Activated T-helper 2 cell treated with anti-CD3 and anti-CD28 coated beads, Interferon-gamma antibody, Interleukin-2, Interleukin-4, amounts not matched to agents 10 μg/mL and 5 μg/mL and 100 μg/mL, durations not matched to agents 14 hours and 24 hours and 36 hours (primary cell): ENCODE measurements at regions of chr13 and their contacts with region 1.

Region 1: DNA sequence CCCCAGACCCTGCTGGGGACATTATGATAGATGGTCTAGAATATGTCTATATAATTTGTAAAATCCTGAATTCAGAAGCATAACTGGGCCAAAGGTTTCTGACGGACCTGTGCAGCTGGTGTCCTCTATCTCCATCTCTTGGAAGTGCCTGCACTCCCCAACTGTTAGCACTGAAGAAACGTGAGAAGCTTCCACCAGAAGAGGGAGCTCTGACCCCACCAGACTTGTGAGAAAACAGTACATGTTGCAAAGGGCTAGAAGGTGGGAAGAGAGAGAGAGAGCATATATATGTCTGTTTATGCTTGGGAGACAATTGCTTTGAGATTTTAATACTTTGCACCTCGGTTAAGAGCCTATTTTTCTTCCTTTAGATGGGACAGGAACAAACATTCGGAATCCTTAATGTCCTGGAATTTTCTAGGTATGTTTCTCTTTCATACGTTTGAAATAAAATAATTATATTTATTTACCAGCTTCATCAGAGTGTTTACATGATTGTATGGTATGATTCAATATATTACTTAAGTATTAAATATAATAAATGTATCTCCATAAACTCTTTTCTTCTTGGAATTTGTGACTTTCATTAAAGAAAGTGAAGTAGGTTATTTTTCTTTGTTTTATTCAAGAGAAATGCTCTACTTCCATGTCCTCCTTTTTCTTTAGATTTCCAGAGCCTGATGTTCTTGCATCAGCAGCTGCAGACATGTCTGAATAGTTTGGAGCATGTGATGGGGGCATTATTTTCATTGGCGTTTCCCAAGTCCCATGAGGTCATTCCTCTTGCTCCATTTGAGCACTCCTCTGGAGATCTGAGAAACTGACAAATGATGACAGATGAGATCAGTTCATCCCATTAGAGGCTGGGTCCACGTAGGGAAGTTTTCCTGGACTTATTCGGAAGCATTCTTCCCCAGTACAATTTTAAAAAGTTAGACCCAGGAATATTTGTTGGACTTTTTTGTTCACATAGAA is 202.9 kb downstream of the ATP8A2 start:
- DNase-seq: peak; percentile 59
- H3K4me3 Mint-ChIP-seq: no peak overlapping the region
- H3K27ac Mint-ChIP-seq: no peak overlapping the region
- H3K4me1 Mint-ChIP-seq: peaks cover 5% of the 10 kb centered on the region
- H3K27me3 Mint-ChIP-seq: peaks cover 32% of the 10 kb centered on the region

Region 2: DNA sequence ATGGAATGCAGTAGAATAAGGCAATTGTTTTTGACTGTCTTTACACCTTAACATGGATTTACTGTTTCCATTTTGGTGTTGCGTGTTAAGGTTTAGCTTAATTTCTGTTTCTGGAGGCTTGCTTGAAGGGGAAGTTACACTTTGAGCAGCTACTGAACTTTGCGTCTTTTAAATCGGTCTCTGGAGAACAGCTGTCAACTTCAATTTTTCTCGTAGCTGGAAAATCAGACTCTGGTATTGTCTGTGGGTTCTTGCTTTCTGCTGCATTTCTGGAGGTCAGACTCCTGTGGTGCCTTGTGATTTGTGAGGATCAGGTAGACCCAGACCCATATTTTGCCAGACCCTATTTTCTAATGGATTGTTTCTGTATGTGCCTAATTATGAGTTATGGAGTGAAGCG is 56.3 kb before region 1 on chr13:
- intact Hi-C with region 1: no loop called
- DNase-seq: no peak
- H3K4me3 Mint-ChIP-seq: no peak overlapping the region
- H3K27ac Mint-ChIP-seq: no peak overlapping the region
- H3K4me1 Mint-ChIP-seq: no peaks in the 10 kb centered on the region
- H3K27me3 Mint-ChIP-seq: peaks cover 1% of the 10 kb centered on the region

Region 3: DNA sequence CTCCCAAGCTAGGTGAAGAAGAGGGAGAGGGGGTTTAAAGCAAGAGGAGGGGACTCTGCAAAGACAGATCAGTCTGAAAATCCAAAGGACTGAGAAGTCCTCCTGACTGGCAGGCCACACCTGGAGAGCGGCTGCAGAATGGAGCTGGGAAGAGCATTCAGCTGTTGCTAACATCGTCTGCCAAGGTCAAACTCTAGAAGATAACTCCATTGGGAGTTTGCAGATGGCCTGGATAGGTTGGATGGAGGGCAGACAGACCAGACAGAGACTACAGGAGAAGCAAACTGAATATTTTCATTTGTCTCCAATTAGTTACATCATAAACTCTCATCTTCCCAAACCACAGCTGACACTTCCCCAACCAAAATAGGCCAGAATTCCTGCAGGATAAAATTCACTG is 497.0 kb after region 1 on chr13:
- intact Hi-C with region 1: loop called (anchors 1 kb)
- DNase-seq: no peak
- H3K4me3 Mint-ChIP-seq: no peak overlapping the region
- H3K27ac Mint-ChIP-seq: no peak overlapping the region
- H3K4me1 Mint-ChIP-seq: no peaks in the 10 kb centered on the region
- H3K27me3 Mint-ChIP-seq: peaks cover 19% of the 10 kb centered on the region